ENCODE measurements at regions of chr12 and their contacts with region 1.

Region 1: DNA sequence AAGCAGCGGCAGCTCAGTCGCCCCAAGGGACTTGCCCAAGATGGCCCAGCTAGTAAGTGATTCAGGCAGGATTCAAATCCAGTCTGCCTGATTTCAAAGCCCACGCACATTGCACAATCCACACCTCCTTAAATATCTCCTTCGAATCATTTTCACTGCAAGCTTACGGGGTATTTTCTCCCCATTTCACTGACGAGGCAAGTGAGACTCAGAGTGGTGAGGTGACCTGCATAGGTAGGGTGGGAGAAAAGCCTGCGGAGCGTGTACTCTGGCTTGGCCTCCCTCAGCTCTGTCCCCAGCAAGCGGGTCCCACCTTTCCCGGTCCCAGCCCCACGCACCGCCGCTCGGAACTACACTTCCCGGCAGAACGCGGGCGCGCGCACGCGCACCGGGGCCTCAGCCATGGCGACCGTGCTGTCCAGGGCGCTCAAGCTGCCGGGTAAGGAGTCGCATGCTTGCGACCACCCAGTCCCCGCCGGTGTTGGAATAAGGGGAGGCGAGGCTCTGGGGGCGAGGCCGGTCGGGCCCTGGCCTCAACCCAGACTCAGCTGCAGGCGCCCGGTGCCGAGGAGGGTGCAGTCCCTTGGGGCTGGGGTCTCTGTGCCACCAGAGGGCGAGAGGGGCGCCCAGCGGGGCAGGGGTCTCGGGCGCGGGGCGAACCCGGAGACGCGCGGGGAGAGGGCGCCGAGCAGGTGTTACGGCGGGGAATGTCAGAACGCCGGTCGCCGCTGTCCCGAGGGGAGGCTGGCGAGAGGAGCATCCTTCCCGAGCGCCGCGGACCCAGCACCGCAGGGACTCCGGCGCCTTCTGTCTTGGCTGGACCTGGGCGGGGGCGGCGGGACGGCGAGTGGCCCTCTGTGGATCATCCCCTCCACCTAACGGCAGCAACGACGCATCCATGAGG is at the start of gene FAM234B:
- DNase-seq: peak; percentile 30 to 75 (median 61)
- ATAC-seq: peak; percentile 95 to 99 (median 98)
- H3K4me3 ChIP-seq: peak within 1 kb of the TSS; percentile 76 to 87
- H3K4me3 Mint-ChIP-seq: peak within 1 kb of the TSS; percentile 83 to 85 (median 83)
- H3K27ac ChIP-seq: peak within 1 kb of the TSS; percentile 47
- H3K27ac Mint-ChIP-seq: peak within 1 kb of the TSS in 1 of 2 donors; percentile 56
- H3K4me1 ChIP-seq: peaks cover 0 to 10% of the 10 kb centered on the region in 2 experiments
- H3K4me1 Mint-ChIP-seq: peaks cover 9 to 21% (median 19%) of the 10 kb centered on the region in 3 donors
- H3K27me3 ChIP-seq: peaks cover 0 to 4% of the 10 kb centered on the region in 2 experiments
- H3K27me3 Mint-ChIP-seq: peaks cover 3 to 5% of the 10 kb centered on the region in 2 donors
- total RNA-seq, gene FAM234B: 4.3 to 5.8 (median 4.6) TPM

Region 2: GRCh38 chr12:13163868-13164670 is 119.8 kb after region 1 on chr12:
- CTCF ChIA-PET with region 1: no interaction called
- POLR2A ChIA-PET with region 1: interaction called in 1 of 2 experiments, 10 read pairs
- DNase-seq: no peak
- ATAC-seq: no peak
- H3K4me3 ChIP-seq: no peak overlapping the region
- H3K4me3 Mint-ChIP-seq: no peak overlapping the region
- H3K27ac ChIP-seq: no peak overlapping the region
- H3K27ac Mint-ChIP-seq: no peak overlapping the region
- H3K4me1 ChIP-seq: peaks cover 17 to 21% of the 10 kb centered on the region in 2 experiments
- H3K4me1 Mint-ChIP-seq: peaks cover 23 to 25% (median 25%) of the 10 kb centered on the region in 3 donors
- H3K27me3 ChIP-seq: peaks cover 0 to 2% of the 10 kb centered on the region in 2 experiments
- H3K27me3 Mint-ChIP-seq: no peaks in the 10 kb centered on the region